CD8-positive, alpha-beta T cell (primary cell): ENCODE measurements at regions of chr12 and their contacts with region 1.

Region 1: DNA sequence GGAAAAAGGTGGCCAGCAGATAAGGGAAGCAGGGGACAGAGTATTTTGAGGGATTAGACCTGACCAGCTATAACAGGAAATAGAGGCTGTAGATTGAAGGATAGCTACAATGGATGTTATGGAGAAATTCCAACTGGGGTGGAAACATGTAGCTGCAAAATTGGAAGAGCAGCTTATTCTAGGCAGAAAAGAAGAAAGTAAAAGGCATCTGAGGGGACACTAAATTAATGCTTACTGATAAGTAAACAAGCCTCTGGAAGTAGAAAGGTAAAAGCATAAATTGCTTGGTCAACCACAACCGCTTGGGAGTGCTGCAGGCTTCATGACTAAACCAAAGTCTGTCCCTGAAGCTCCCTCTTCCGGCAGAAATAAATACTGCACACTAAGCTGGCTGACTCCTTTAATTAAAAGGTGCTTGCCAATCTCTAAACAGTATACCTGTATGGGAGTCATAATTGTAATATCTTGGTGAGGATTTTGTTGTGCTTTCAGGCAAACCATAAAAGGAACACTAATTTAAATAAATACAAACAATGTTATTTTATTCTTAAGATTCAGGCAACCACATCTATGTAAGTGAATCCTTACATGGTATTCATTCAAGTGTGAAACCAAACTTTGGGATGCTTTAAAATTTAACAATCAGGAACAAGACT is 7.7 kb downstream of the UBC start:
- DNase-seq: peak; percentile 81 to 95 (median 91)
- ATAC-seq: peak; percentile 96
- H3K4me3 ChIP-seq: no peak overlapping the region
- H3K4me3 Mint-ChIP-seq: no peak overlapping the region
- H3K27ac ChIP-seq: no peak overlapping the region
- H3K27ac Mint-ChIP-seq: peak overlapping the region; percentile 42
- H3K4me1 ChIP-seq: peaks cover 11% of the 10 kb centered on the region
- H3K4me1 Mint-ChIP-seq: peaks cover 28% of the 10 kb centered on the region
- H3K27me3 ChIP-seq: no peaks in the 10 kb centered on the region
- H3K27me3 Mint-ChIP-seq: no peaks in the 10 kb centered on the region
- CTCF ChIP-seq: peak; percentile 99

Region 2: DNA sequence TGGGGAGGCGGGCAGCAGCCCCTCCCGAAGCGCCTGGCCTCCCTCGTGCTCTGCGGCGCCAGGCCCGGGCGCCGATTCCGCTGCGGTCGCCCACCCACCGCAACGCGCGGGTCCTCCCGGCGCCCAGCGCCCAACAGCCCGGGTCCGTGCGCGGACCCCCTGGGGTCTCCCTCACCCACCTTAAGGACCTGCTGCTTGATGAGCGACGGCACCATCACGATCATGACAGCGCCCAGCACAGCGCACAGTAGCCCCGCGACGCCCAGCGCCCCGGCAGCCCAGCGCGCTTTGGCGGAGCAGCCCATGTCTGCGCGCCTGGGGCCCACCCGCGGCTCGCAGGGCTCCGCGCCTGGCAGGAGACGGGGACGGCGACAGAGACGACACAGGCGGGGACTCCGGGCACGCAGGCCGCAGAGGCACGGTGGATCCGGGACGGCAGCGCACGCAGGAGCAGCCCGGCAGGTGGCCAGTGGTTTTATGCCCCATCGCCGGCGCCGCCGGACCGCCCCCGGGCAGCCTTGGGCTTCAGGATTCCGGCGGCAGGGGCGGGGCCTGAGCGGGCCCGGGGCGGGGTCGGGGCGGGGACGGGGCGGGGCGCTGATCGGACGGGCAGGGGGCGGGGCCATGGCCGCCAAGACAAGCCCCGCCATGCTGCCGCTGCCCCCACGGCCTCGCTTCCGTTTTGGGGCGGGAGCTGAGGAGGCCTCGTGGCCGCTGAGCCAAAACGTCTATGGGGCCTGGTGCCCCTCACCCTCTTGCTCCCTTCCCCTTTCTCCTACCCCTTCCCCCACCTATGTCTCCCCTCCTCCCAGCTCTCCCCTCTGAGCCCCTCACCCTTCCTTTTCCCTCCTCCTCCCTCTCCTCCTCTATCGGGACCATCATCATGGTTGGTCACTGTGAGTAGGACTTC is 43.1 kb before region 1 on chr12 and contains the start of gene SCARB1:
- CTCF ChIA-PET with region 1: interaction called, 3 read pairs
- POLR2A ChIA-PET with region 1: no interaction called
- intact Hi-C with region 1: loop called in 1 of 2 experiments (anchors 5 kb)
- DNase-seq: peak; percentile 63 to 89 (median 73)
- ATAC-seq: peak; percentile 94
- H3K4me3 ChIP-seq: peak within 1 kb of the TSS; percentile 46 to 81
- H3K4me3 Mint-ChIP-seq: peak within 1 kb of the TSS; percentile 81
- H3K27ac ChIP-seq: peak within 1 kb of the TSS; percentile 15 to 46
- H3K27ac Mint-ChIP-seq: peak within 1 kb of the TSS; percentile 57
- H3K4me1 ChIP-seq: peaks cover 15% of the 10 kb centered on the region
- H3K4me1 Mint-ChIP-seq: peaks cover 23% of the 10 kb centered on the region
- H3K27me3 ChIP-seq: no peaks in the 10 kb centered on the region
- H3K27me3 Mint-ChIP-seq: no peaks in the 10 kb centered on the region
- CTCF ChIP-seq: no peak
- total RNA-seq, gene SCARB1: 3.0 to 3.2 TPM

Region 3: DNA sequence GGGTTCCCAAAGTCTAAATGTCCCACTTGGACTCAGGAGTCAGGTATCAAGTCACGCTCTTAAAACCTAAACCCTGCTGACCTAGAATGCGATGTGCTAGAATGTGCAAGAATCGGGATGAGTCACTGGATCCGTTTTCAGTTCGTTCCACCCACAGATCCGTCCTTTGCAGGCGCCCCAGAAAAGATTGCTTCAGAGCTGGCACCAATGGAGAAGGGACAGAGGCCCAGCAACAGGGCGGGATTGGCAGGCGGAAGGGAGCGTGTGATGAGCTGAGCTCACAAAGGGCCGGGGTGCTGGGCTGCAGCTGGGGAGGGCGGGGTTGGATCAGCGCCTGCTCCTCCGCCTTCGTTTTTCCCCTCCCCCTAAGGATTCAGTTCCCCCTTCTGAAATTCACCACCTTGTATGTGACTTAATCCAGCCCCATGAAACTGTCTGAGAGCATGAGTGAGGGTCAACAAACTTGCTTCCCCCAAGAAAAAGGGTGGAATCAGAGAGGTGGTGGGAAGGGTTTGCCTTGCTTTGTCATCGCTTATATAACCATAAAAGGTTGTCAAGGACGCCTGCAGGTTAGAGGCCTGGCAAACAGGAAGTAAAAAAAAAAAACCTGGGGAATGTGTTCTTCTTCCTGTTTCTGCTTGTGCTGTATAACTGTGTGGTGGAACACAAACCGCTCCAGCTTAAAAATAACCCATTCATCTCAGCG is 10.6 kb after region 1 on chr12:
- CTCF ChIA-PET with region 1: interaction called, 44 read pairs
- POLR2A ChIA-PET with region 1: interaction called, 11 read pairs
- intact Hi-C with region 1: loop called in 1 of 2 experiments (anchors 1 kb)
- DNase-seq: peak; percentile 79 to 98 (median 91)
- ATAC-seq: peak; percentile 73
- H3K4me3 ChIP-seq: peak overlapping the region; percentile 31 to 40
- H3K4me3 Mint-ChIP-seq: peak overlapping the region; percentile 82
- H3K27ac ChIP-seq: peak overlapping the region; percentile 87 to 89
- H3K27ac Mint-ChIP-seq: peak overlapping the region; percentile 97
- H3K4me1 ChIP-seq: peaks cover 62% of the 10 kb centered on the region
- H3K4me1 Mint-ChIP-seq: peaks cover 87% of the 10 kb centered on the region
- H3K27me3 ChIP-seq: no peaks in the 10 kb centered on the region
- H3K27me3 Mint-ChIP-seq: no peaks in the 10 kb centered on the region
- CTCF ChIP-seq: no peak

Region 4: DNA sequence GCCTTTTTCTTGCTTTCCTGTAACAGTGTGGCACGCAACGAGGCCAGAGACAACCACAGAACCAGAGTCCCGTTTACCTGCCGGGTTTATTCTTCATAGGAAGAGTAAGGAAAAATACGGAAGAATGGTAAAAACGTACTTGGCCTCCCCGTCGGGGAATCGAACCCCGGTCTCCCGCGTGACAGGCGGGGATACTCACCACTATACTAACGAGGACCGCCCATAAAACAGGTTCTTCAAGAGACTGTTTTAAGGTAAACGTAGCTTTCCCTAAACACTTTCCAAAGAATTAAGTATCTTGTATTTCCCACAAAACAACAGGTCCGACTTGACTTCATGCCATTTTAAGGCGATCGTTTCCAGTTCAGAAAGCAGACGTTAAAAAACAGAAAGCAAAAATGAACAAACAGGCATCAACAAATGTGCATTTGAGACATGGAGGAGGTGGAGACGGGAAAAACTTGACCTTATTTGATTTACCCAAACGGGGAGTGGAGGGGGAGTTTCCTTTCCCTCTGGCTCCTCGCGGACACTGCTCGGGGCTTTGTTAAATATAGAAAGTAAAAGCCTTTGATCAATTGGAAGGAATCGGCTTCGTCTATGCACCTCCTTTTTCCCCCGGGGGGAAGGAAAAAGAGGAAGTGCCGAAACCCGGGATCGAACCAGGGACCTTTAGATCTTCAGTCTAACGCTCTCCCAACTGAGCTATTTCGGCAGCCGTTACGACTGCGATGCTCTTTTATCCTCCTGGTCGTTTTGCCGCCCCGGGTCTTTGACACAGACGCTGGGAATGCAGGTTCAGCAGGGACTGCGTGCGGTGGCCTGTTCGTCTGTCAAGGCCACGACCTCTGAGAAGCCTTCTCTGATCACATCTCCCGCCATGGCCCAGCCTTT is 20.7 kb after region 1 on chr12:
- CTCF ChIA-PET with region 1: interaction called, 19 read pairs
- POLR2A ChIA-PET with region 1: interaction called, 7 read pairs
- intact Hi-C with region 1: loop called in 1 of 2 experiments (anchors 2 kb)
- DNase-seq: peak; percentile 84 to 96 (median 91)
- ATAC-seq: peak; percentile 84
- H3K4me3 ChIP-seq: peak overlapping the region; percentile 71
- H3K4me3 Mint-ChIP-seq: peak overlapping the region; percentile 93
- H3K27ac ChIP-seq: peak overlapping the region; percentile 51 to 55
- H3K27ac Mint-ChIP-seq: peak overlapping the region; percentile 96
- H3K4me1 ChIP-seq: peaks cover 18% of the 10 kb centered on the region
- H3K4me1 Mint-ChIP-seq: peaks cover 22% of the 10 kb centered on the region
- H3K27me3 ChIP-seq: no peaks in the 10 kb centered on the region
- H3K27me3 Mint-ChIP-seq: no peaks in the 10 kb centered on the region
- CTCF ChIP-seq: no peak

Region 5: DNA sequence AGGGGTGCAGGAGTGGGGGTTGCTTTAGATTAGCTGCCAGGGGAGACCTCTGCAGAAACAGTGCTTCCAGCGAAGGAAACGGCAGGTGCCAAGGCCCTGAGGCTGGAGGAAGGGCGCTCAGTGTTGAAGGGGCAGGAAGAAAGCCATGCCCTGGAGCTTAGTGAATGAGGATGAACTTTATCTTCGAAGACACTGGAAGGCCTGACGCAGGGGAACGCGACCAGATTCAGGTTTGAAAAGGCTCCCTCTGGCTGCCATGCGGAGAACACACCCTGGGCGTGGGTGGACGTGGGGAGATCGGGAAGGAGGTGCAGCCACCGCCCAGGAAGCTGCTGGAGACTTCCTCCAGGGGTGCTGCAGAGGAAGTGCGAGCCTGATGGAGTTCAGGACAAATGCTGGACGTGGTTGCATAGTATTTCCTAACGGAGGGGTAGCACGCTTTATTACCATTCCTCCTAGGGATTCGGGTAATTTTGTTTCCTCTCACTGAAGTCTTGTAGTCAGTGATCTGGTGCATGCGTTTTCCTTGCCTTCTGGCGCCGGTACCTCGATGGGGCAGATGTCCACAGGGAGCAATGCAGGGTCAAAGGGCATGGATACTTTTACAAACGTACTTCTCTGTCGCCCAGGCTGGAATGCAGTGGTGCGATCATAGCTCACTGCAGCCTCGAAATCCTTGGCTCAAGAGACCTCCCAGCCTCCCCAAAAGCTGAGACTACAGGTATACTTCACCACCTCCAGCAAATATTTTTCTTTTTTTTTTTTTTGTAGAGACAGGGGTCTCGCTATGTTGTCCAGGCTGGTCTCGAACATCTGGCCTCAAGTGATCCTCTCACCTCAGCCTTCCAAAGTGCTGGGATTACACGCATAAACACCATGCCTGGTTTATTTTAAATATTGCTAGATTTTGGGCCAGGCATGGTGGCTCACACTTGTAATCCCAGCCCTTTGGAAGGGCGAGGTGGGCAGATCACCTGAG is 34.1 kb after region 1 on chr12:
- CTCF ChIA-PET with region 1: interaction called, 216 read pairs
- POLR2A ChIA-PET with region 1: interaction called, 39 read pairs
- intact Hi-C with region 1: loop called (anchors 1 kb)
- DNase-seq: peak; percentile 53 to 91 (median 82)
- ATAC-seq: peak; percentile 64
- H3K4me3 ChIP-seq: peak overlapping the region; percentile 65 to 81
- H3K4me3 Mint-ChIP-seq: no peak overlapping the region
- H3K27ac ChIP-seq: peak overlapping the region; percentile 46 to 79
- H3K27ac Mint-ChIP-seq: no peak overlapping the region
- H3K4me1 ChIP-seq: peaks cover 23% of the 10 kb centered on the region
- H3K4me1 Mint-ChIP-seq: peaks cover 11% of the 10 kb centered on the region
- H3K27me3 ChIP-seq: no peaks in the 10 kb centered on the region
- H3K27me3 Mint-ChIP-seq: no peaks in the 10 kb centered on the region
- CTCF ChIP-seq: peak; percentile 88

Region 6: GRCh38 chr12:124947561-124948398 is 41.0 kb after region 1 on chr12:
- CTCF ChIA-PET with region 1: interaction called, 216 read pairs
- POLR2A ChIA-PET with region 1: interaction called, 3 read pairs
- intact Hi-C with region 1: no loop called
- DNase-seq: no peak
- ATAC-seq: no peak
- H3K4me3 ChIP-seq: no peak overlapping the region
- H3K4me3 Mint-ChIP-seq: no peak overlapping the region
- H3K27ac ChIP-seq: no peak overlapping the region
- H3K27ac Mint-ChIP-seq: no peak overlapping the region
- H3K4me1 ChIP-seq: no peaks in the 10 kb centered on the region
- H3K4me1 Mint-ChIP-seq: no peaks in the 10 kb centered on the region
- H3K27me3 ChIP-seq: no peaks in the 10 kb centered on the region
- H3K27me3 Mint-ChIP-seq: no peaks in the 10 kb centered on the region
- CTCF ChIP-seq: no peak

Region 7: DNA sequence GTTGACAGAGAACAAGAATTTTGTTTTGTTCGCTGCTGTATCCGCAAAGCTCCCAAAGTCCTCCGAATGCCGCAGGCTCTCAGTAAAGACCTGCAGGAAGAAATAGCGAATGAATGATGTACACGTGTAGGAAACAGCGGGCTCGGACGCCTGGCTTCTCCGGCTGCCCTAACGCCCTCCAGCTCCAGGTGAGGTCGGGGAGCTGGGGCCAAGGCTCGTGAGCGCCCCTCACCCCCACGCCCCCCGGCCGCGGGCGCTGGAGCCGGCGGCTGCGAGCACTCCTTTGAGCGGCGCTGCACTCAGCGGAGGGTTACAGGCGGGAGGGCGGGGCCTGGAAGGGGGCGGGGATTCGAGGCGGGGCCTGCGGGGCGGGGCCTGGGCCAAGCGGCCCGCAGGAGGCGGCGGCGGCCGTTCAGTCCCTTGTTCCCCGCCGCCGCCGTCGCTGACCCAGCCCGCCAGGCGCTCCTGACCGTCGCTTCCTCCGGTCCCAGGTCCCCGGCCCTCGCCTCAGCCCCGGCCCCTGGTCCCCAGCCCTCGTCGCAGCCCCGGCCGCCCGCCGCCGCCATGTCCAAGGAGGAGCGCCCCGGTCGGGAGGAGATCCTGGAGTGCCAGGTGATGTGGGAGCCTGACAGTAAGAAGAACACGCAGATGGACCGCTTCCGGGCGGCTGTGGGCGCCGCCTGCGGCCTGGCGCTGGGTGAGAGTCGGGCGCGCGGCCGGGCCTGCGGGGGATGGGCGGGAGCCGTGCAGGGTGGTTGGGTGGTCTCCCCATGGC is 158.5 kb after region 1 on chr12 and contains the start of gene AACS:
- CTCF ChIA-PET with region 1: no interaction called
- POLR2A ChIA-PET with region 1: no interaction called
- intact Hi-C with region 1: loop called (anchors 2 to 5 kb)
- DNase-seq: peak; percentile 59 to 85 (median 74)
- ATAC-seq: peak; percentile 96
- H3K4me3 ChIP-seq: peak within 1 kb of the TSS; percentile 67 to 98
- H3K4me3 Mint-ChIP-seq: peak within 1 kb of the TSS; percentile 86
- H3K27ac ChIP-seq: peak within 1 kb of the TSS; percentile 25 to 33
- H3K27ac Mint-ChIP-seq: peak within 1 kb of the TSS; percentile 69
- H3K4me1 ChIP-seq: peaks cover 10% of the 10 kb centered on the region
- H3K4me1 Mint-ChIP-seq: peaks cover 21% of the 10 kb centered on the region
- H3K27me3 ChIP-seq: no peaks in the 10 kb centered on the region
- H3K27me3 Mint-ChIP-seq: peaks cover 1% of the 10 kb centered on the region
- CTCF ChIP-seq: no peak
- total RNA-seq, gene AACS: 11.0 to 12.3 TPM